ENCODE measurements at regions of chr19 and their contacts with region 1.

Region 1: GRCh38 chr19:34134190-34135053 is 37.9 kb upstream of the LSM14A start:
- DNase-seq: peak; percentile 63
- H3K4me3 ChIP-seq: peak overlapping the region; percentile 48 to 57
- H3K27ac ChIP-seq: peak overlapping the region; percentile 67 to 78
- H3K4me1 ChIP-seq: no peaks in the 10 kb centered on the region
- H3K27me3 ChIP-seq: no peaks in the 10 kb centered on the region
- CTCF ChIP-seq: no peak
- POLR2A ChIP-seq: peak; percentile 60

Region 2: DNA sequence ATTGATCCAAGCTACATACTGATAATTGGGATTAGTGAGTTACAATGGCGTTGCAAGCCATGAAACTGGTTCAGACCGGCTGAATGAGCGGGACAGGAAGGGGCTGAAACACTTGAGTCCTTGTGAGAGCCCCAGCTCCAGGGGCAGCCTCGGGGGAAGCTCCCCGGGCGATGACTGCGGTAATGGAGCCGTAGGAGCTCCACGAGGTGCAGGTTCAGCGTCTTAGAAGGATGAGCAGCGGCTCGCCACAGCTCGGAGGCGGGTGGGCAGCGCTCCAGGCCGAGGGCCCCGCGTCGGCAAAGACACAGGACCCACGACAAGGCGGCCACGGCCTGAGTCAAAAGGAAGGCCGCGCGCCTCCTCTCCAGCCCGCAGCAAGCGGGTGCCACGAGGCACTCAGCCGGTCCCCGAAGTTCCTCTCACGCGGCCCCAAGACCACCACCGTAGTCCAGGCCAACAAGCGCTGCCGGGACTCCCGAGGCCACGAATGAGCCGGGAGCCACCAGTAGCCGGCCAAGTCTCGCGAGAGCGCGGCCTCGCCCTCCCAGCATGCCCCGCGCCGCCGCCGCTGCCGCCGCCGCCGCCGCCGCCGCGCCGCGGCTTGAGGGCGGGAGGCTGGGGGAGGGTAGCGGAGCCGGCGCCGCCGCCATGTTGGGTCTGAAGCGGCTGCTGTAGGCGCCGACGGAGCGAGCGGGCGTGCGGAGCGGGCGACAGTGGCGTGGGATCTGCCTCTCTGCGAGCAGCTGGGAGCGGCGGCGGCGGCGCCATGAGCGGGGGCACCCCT is 37.6 kb after region 1 on chr19 and contains the start of gene LSM14A:
- intact Hi-C with region 1: loop called (anchors 2 kb)
- DNase-seq: peak; percentile 89
- H3K4me3 ChIP-seq: peak within 1 kb of the TSS; percentile 89 to 96
- H3K27ac ChIP-seq: peak within 1 kb of the TSS; percentile 99
- H3K4me1 ChIP-seq: peaks cover 4% of the 10 kb centered on the region
- H3K27me3 ChIP-seq: no peaks in the 10 kb centered on the region
- CTCF ChIP-seq: peak in 1 of 4 experiments; percentile 21
- POLR2A ChIP-seq: peak; percentile 55
- total RNA-seq, gene LSM14A: 145 to 189 TPM

Measured in prostate gland (tissue), 2 donors.